ENCODE measurements at regions of chr4 and their contacts with region 1.

Region 1: GRCh38 chr4:121252224-121252806 is 88.2 kb upstream of the TNIP3 start:
- DNase-seq: peak in 5 of 6 donors; percentile 15 to 77 (median 61)
- ATAC-seq: peak; percentile 68 to 91 (median 84)
- H3K4me3 ChIP-seq: no peak overlapping the region
- H3K27ac ChIP-seq: no peak overlapping the region
- H3K4me1 ChIP-seq: no peaks in the 10 kb centered on the region
- H3K27me3 ChIP-seq: no peaks in the 10 kb centered on the region
- CTCF ChIP-seq: peak; percentile 58 to 83 (median 70)

Region 2: GRCh38 chr4:120144634-120145033 is 1107.7 kb before region 1 on chr4:
- intact Hi-C with region 1: loop called in 1 of 3 experiments (anchors 10 kb)
- DNase-seq: no peak
- ATAC-seq: no peak
- H3K4me3 ChIP-seq: no peak overlapping the region
- H3K27ac ChIP-seq: no peak overlapping the region
- H3K4me1 ChIP-seq: no peaks in the 10 kb centered on the region
- H3K27me3 ChIP-seq: no peaks in the 10 kb centered on the region
- CTCF ChIP-seq: no peak

Region 3: DNA sequence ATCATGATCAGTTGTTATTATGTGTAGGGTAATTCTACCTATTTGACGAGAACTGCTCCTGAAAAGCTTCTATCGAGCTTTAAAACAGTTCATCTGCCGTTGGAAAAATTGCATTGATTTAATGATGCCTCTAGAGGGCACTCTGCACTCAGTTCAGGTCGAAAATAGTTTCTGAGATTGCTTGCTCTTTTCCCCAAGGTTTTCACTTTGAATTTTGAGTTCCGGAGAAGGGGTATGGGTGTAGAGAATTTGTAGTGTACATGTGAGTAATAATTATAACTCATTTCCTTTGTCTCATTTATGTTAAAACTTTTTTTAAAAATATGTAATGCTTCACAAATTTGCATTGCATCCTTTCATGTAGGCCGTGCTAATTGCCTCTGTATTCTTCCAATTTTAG is 59.8 kb before region 1 on chr4:
- intact Hi-C with region 1: loop called in 1 of 3 experiments (anchors 10 kb)
- DNase-seq: no peak
- ATAC-seq: peak in 3 of 4 donors; percentile 50 to 61 (median 59)
- H3K4me3 ChIP-seq: no peak overlapping the region
- H3K27ac ChIP-seq: no peak overlapping the region
- H3K4me1 ChIP-seq: peaks cover 0 to 3% (median 0%) of the 10 kb centered on the region in 3 donors
- H3K27me3 ChIP-seq: peaks cover 0 to 8% (median 2%) of the 10 kb centered on the region in 4 donors
- CTCF ChIP-seq: peak; percentile 34 to 63 (median 52)